Lower lobe of right lung (tissue), 2 donors: ENCODE measurements at regions of chr21 and their contacts with region 1.

Region 1: GRCh38 chr21:29091032-29091431 is 17.6 kb upstream of the CCT8 start:
- DNase-seq: no peak
- ATAC-seq: no peak
- H3K4me3 ChIP-seq: no peak overlapping the region
- H3K27ac ChIP-seq: no peak overlapping the region
- H3K4me1 ChIP-seq: no peaks in the 10 kb centered on the region
- H3K27me3 ChIP-seq: no peaks in the 10 kb centered on the region
- CTCF ChIP-seq: no peak

Region 2: DNA sequence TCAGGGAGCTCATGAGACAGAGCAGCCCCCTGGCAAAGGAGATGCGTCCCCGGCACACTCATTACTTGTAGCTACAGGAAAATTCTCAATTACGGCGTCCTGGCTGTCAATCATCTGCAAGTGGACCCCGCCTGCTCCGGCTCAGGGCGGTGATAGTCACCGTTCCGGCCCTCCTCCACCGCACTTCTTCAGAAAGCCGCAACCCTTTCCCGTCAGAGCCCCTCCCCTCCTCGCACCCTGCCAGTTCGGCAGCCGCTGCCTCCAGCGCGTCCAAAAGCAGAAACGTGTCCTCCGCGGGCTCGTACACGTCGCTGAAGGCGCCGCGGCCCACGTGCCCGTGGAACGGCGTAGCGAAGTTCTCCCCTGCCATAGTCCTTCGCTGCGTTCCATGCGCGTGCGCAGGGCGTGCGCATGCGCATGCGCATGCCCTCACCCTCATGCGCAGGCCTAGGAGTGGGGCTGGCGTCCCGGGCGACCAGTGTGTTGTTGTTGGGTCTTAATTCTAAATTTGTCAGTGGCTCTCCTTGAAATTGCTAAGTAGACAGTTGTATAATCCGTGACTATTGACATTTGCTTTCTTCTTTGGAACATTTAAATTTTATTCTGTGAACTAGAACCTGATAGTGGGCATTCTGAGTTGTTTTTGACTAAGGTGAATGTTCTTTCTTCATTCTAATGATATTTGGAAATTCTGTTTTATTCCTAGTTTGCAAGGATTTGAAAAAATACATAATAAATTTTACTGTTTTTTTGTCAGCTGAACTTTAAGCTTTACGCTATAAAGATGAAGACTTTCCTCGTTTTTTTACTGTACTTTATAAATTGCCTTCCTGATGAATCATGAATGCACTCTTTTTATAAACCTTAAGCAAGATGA is 205.8 kb before region 1 on chr21:
- intact Hi-C with region 1: no loop called
- DNase-seq: peak; percentile 93
- ATAC-seq: peak; percentile 100
- H3K4me3 ChIP-seq: peak overlapping the region; percentile 69
- H3K27ac ChIP-seq: peak overlapping the region; percentile 96
- H3K4me1 ChIP-seq: peaks cover 15% of the 10 kb centered on the region
- H3K27me3 ChIP-seq: peaks cover 5% of the 10 kb centered on the region
- CTCF ChIP-seq: no peak

Region 3: GRCh38 chr21:29372063-29372802 is 281.2 kb after region 1 on chr21:
- intact Hi-C with region 1: loop called (anchors 10 kb)
- DNase-seq: no peak
- ATAC-seq: peak; percentile 88 to 92
- H3K4me3 ChIP-seq: no peak overlapping the region
- H3K27ac ChIP-seq: no peak overlapping the region
- H3K4me1 ChIP-seq: peaks cover 7% of the 10 kb centered on the region
- H3K27me3 ChIP-seq: no peaks in the 10 kb centered on the region
- CTCF ChIP-seq: peak; percentile 74

Region 4: DNA sequence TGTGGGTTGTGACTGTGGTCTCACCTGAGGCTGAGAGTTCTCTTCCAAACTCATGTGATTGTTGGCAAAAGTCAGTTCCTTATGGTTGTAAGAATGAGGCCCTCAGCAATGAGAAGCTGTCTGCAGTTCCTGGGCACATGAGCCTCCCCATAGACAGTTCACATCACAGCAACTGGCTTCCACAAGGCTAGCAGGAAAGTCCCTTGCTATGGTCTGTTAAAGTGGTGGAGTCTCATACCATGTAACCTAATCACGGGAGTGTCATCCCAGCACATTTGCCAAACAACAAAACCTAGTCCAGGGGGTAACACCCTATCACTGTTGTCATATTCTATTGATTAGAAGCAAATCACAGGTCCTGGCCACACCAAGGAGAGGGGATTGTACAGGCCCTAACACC is 371.4 kb after region 1 on chr21:
- intact Hi-C with region 1: no loop called
- DNase-seq: no peak
- ATAC-seq: no peak
- H3K4me3 ChIP-seq: no peak overlapping the region
- H3K27ac ChIP-seq: no peak overlapping the region
- H3K4me1 ChIP-seq: no peaks in the 10 kb centered on the region
- H3K27me3 ChIP-seq: no peaks in the 10 kb centered on the region
- CTCF ChIP-seq: no peak